ENCODE measurements at regions of chr1 and their contacts with region 1.

Region 1: GRCh38 chr1:115469703-115470476 is 131.8 kb upstream of the NGF start:
- DNase-seq: peak; percentile 53
- ATAC-seq: peak; percentile 72

Region 2: DNA sequence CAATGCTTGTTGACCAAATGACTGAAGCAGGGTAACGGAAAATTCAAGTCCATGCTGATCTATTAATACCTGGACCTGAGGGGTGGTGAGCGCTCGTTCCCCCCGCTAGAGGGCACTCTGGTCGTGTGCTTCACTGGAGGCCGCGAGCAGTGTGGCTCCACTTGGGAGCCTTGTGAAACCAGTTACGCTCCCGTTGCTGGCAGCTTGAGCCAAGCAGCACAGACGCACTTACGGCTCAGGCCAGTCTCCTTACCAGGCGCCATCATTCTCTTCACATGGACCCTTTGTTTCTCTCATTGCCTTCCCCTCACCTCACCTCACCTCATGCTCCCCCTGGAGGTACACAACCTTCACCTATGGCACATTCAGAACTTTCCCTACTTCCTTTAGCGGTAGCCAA is 330.9 kb before region 1 on chr1:
- intact Hi-C with region 1: loop called (anchors 5 kb)
- DNase-seq: peak; percentile 93
- ATAC-seq: peak; percentile 93

Region 3: GRCh38 chr1:115275212-115275611 is 194.7 kb before region 1 on chr1:
- intact Hi-C with region 1: loop called (anchors 10 kb)
- DNase-seq: no peak
- ATAC-seq: no peak

Region 4: GRCh38 chr1:115295904-115296696 is 173.8 kb before region 1 on chr1:
- intact Hi-C with region 1: no loop called
- DNase-seq: no peak
- ATAC-seq: no peak

Region 5: GRCh38 chr1:115340879-115341278 is 129.0 kb before region 1 on chr1:
- intact Hi-C with region 1: loop called (anchors 10 kb)
- DNase-seq: no peak
- ATAC-seq: peak; percentile 51

Region 6: GRCh38 chr1:115426231-115426771 is 43.6 kb before region 1 on chr1:
- intact Hi-C with region 1: no loop called
- DNase-seq: peak; percentile 74
- ATAC-seq: peak; percentile 92

Measured in Right ventricle myocardium superior (tissue), 1 donor.